ENCODE measurements at regions of chr4 and their contacts with region 1.

Region 1: GRCh38 chr4:74874753-74875367 is 58.1 kb upstream of the PARM1 start:
- DNase-seq: peak; percentile 15 to 75
- ATAC-seq: peak; percentile 84 to 89; a peak in 5 of 6 replicates
- H3K4me3 ChIP-seq: no peak overlapping the region
- H3K27ac ChIP-seq: no peak overlapping the region
- H3K4me1 ChIP-seq: peaks cover 4% of the 10 kb centered on the region; the same call in 1 of the 3 replicates
- CTCF ChIP-seq: peak; percentile 70
- EP300 ChIP-seq: no peak
- POLR2A ChIP-seq: no peak
- RAD21 ChIP-seq: peak; percentile 56 to 68

Region 2: DNA sequence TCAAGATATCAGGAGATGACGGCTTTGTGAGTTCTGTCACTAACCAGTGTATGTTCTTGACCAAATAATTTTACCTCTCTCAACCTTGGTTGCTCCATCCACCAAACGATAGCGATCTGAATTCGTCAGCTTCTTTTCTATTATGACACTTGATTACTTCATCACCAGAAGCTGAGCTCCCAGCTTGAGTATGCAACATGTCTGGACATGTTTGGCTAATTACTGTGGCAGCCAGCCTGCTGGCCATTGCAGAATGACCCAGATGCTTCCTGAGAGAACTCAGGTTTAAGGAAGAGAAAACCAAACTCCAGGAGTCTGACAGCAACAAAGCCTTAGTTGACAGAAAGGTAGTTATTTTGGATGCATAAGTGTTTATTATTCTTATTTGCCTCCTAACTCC is 11.6 kb after region 1 on chr4:
- CTCF ChIA-PET with region 1: interaction called, 11 read pairs
- POLR2A ChIA-PET with region 1: no interaction called
- DNase-seq: peak in 1 of 2 experiments; percentile 11
- ATAC-seq: no peak
- H3K4me3 ChIP-seq: no peak overlapping the region
- H3K27ac ChIP-seq: no peak overlapping the region
- H3K4me1 ChIP-seq: no peaks in the 10 kb centered on the region
- CTCF ChIP-seq: no peak
- EP300 ChIP-seq: no peak
- POLR2A ChIP-seq: no peak
- RAD21 ChIP-seq: no peak

Region 3: DNA sequence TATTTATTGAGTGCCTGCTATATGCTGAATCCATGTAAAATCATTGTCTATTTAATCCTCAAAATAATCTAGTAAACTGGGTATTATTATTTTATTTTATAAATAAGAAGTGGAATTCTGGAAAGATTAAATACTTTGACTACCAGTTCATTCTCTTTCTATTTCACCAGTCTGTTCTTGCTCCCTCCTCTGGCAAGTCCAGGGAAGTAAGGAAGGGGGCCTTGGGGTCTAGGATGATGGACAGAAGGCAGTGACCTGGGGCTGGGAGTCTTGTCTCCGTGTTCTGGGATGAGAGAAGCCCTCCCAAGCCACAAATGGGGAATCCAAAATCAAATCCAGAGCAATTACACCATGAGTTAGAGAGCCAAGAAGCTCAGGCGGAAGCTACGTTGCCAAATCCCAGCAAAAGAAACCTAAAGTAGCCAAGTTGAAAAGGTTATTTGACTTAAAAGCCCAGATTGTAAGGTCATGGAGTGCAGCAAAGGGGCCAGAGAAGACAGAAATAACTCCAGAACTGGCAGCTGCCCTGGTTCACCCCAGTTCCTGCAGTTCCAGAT is 29.7 kb after region 1 on chr4:
- CTCF ChIA-PET with region 1: no interaction called
- POLR2A ChIA-PET with region 1: no interaction called
- DNase-seq: no peak
- ATAC-seq: no peak
- H3K4me3 ChIP-seq: no peak overlapping the region
- H3K27ac ChIP-seq: no peak overlapping the region
- H3K4me1 ChIP-seq: no peaks in the 10 kb centered on the region
- CTCF ChIP-seq: no peak
- EP300 ChIP-seq: no peak
- POLR2A ChIP-seq: no peak
- RAD21 ChIP-seq: no peak